Naive thymus-derived CD4-positive, alpha-beta T cell (primary cell): ENCODE measurements at regions of chr5 and their contacts with region 1.

Region 1: DNA sequence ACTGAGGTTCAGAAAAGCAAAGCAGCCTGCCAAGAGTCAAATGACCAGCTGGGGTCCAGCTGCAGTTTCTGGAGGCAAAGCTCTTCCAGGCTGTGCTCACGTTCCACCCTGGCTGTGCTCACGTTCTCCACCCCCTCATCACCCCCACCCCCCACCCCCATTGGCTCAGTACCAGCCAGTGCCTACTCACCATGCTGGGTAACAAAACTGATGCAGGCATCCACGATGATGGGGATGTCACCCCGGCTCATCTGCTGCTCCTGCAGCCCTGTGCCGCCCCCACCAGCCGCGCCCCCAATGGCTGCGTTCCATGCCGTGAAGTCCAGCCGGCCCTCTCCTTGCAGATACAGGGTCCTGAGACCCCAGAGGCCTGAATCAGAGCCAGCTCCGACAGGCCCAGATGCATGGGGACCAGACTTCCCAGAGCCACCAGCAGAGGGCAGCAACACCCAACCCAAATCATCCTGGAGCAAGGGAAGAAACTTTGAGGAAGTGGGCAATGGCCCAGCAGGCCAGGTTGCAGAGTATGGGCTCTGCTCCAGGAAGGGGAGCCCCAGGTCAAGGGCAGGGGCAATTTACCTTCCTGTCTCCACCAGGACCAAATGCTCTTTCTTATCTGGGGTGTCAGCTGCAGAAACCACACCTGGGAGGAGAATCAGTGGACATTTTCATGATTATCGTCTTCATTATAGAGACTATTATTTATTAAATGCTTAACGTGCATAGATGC is 13.7 kb upstream of the FCHSD1 start:
- DNase-seq: peak; percentile 36 to 75 (median 61)
- ATAC-seq: peak; percentile 94
- H3K4me3 ChIP-seq: no peak overlapping the region
- H3K4me3 Mint-ChIP-seq: no peak overlapping the region
- H3K27ac ChIP-seq: no peak overlapping the region
- H3K27ac Mint-ChIP-seq: no peak overlapping the region
- H3K4me1 ChIP-seq: no peaks in the 10 kb centered on the region
- H3K4me1 Mint-ChIP-seq: peaks cover 0 to 6% (median 3%) of the 10 kb centered on the region in 7 donors
- H3K27me3 ChIP-seq: no peaks in the 10 kb centered on the region
- H3K27me3 Mint-ChIP-seq: no peaks in the 10 kb centered on the region

Region 2: DNA sequence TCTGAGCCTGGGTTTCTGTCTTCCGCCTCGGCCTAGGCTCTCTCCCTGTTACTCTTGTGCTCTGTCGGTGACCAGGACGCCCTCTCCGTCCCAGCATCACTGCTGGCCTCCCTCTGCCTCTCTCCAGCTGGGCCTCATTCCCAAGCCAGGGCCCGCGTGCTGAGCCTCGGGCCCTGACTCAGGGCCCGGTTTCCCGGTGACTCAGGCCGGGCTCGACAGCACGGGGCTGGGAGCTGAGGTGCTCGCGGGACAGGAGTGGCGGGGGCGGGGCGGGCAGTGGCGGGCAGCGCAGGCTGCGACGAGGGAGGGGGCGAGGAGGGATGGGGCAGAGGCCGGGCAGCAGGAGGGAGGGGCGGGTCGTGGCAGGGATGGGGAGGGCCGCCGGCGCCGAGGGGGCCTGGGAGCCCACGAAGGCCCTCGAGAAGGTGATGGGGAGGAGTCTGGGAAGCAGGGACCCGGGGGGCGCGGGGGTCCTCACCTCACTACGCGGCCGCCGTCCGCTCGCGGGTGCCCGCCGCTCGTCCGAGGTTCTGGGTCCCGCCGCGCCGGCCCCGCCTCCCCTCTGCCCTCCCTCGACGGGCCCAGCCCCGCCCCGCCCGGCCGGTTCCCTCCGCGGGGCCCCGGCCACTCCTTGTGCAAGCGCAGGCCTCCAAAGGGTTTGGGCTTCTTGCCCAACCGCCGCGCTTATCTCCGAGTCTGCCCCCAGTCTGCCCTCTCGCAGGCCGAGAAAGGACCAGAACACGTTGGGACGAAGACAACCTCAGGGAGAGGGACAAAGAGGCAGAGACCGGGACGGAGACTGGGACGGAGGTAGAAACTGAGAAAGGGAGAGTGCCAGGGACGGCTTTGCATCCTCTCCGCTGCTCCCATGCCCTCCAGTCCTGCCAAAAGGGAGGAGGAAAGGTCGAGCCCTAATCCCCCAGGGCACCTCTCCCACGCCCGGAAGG is 17.1 kb after region 1 on chr5 and contains the start of gene ARAP3:
- CTCF ChIA-PET with region 1: interaction called, 7 read pairs
- POLR2A ChIA-PET with region 1: no interaction called
- intact Hi-C with region 1: loop called in 1 of 2 experiments (anchors 2 kb)
- DNase-seq: peak in 2 of 9 donors; percentile 35 to 64
- ATAC-seq: peak; percentile 84
- H3K4me3 ChIP-seq: peak within 1 kb of the TSS; percentile 64
- H3K4me3 Mint-ChIP-seq: peak within 1 kb of the TSS; percentile 65 to 84 (median 78)
- H3K27ac ChIP-seq: peak within 1 kb of the TSS; percentile 32
- H3K27ac Mint-ChIP-seq: peak within 1 kb of the TSS in 8 of 9 donors; percentile 4 to 77 (median 46)
- H3K4me1 ChIP-seq: peaks cover 14 to 16% of the 10 kb centered on the region in 2 donors
- H3K4me1 Mint-ChIP-seq: peaks cover 15 to 36% (median 27%) of the 10 kb centered on the region in 7 donors
- H3K27me3 ChIP-seq: no peaks in the 10 kb centered on the region
- H3K27me3 Mint-ChIP-seq: no peaks in the 10 kb centered on the region
- total RNA-seq, gene ARAP3: 1.0 to 15.3 (median 9.8) TPM

Region 3: GRCh38 chr5:141701360-141702119 is 36.6 kb after region 1 on chr5:
- CTCF ChIA-PET with region 1: interaction called, 4 read pairs
- POLR2A ChIA-PET with region 1: interaction called, 4 read pairs
- intact Hi-C with region 1: loop called in 1 of 2 experiments (anchors 1 kb)
- DNase-seq: no peak
- ATAC-seq: peak; percentile 28
- H3K4me3 ChIP-seq: peak overlapping the region; percentile 58
- H3K4me3 Mint-ChIP-seq: peak overlapping the region in 7 of 10 donors; percentile 76 to 89 (median 83)
- H3K27ac ChIP-seq: no peak overlapping the region
- H3K27ac Mint-ChIP-seq: peak overlapping the region in 4 of 9 donors; percentile 14 to 54 (median 18)
- H3K4me1 ChIP-seq: peaks cover 9 to 11% of the 10 kb centered on the region in 2 donors
- H3K4me1 Mint-ChIP-seq: peaks cover 5 to 20% (median 12%) of the 10 kb centered on the region in 7 donors
- H3K27me3 ChIP-seq: no peaks in the 10 kb centered on the region
- H3K27me3 Mint-ChIP-seq: peaks cover 25 to 47% (median 40%) of the 10 kb centered on the region in 5 donors

Region 4: GRCh38 chr5:141811287-141812155 is 146.6 kb after region 1 on chr5:
- CTCF ChIA-PET with region 1: interaction called, 6 read pairs
- POLR2A ChIA-PET with region 1: no interaction called
- intact Hi-C with region 1: loop called (anchors 1 to 5 kb)
- DNase-seq: peak in 5 of 9 donors; percentile 7 to 23 (median 18)
- ATAC-seq: peak; percentile 71
- H3K4me3 ChIP-seq: no peak overlapping the region
- H3K4me3 Mint-ChIP-seq: peak overlapping the region in 1 of 10 donors; percentile 25
- H3K27ac ChIP-seq: no peak overlapping the region
- H3K27ac Mint-ChIP-seq: no peak overlapping the region
- H3K4me1 ChIP-seq: no peaks in the 10 kb centered on the region
- H3K4me1 Mint-ChIP-seq: peaks cover 0 to 8% (median 0%) of the 10 kb centered on the region in 7 donors
- H3K27me3 ChIP-seq: no peaks in the 10 kb centered on the region
- H3K27me3 Mint-ChIP-seq: peaks cover 46 to 64% (median 49%) of the 10 kb centered on the region in 5 donors

Region 5: GRCh38 chr5:141825791-141826560 is 161.1 kb after region 1 on chr5:
- CTCF ChIA-PET with region 1: no interaction called
- POLR2A ChIA-PET with region 1: no interaction called
- intact Hi-C with region 1: loop called in 1 of 2 experiments (anchors 1 kb)
- DNase-seq: no peak
- ATAC-seq: peak; percentile 48
- H3K4me3 ChIP-seq: no peak overlapping the region
- H3K4me3 Mint-ChIP-seq: no peak overlapping the region
- H3K27ac ChIP-seq: no peak overlapping the region
- H3K27ac Mint-ChIP-seq: peak overlapping the region in 1 of 9 donors; percentile 57
- H3K4me1 ChIP-seq: no peaks in the 10 kb centered on the region
- H3K4me1 Mint-ChIP-seq: peaks cover 0 to 8% (median 0%) of the 10 kb centered on the region in 7 donors
- H3K27me3 ChIP-seq: no peaks in the 10 kb centered on the region
- H3K27me3 Mint-ChIP-seq: peaks cover 0 to 34% (median 14%) of the 10 kb centered on the region in 5 donors

Region 6: GRCh38 chr5:142699184-142699720 is 1034.4 kb after region 1 on chr5:
- CTCF ChIA-PET with region 1: no interaction called
- POLR2A ChIA-PET with region 1: no interaction called
- intact Hi-C with region 1: loop called in 1 of 2 experiments (anchors 1 kb)
- DNase-seq: peak; percentile 53 to 79 (median 68)
- ATAC-seq: peak; percentile 95
- H3K4me3 ChIP-seq: no peak overlapping the region
- H3K4me3 Mint-ChIP-seq: no peak overlapping the region
- H3K27ac ChIP-seq: no peak overlapping the region
- H3K27ac Mint-ChIP-seq: no peak overlapping the region
- H3K4me1 ChIP-seq: no peaks in the 10 kb centered on the region
- H3K4me1 Mint-ChIP-seq: peaks cover 0 to 10% (median 2%) of the 10 kb centered on the region in 7 donors
- H3K27me3 ChIP-seq: no peaks in the 10 kb centered on the region
- H3K27me3 Mint-ChIP-seq: peaks cover 0 to 19% (median 5%) of the 10 kb centered on the region in 5 donors